ENCODE measurements at regions of chr17 and their contacts with region 1.

Region 1: GRCh38 chr17:55314784-55315491 is 50.2 kb downstream of the HLF start:
- DNase-seq: no peak
- H3K4me3 ChIP-seq: no peak overlapping the region
- H3K27ac ChIP-seq: no peak overlapping the region
- H3K4me1 ChIP-seq: no peaks in the 10 kb centered on the region
- H3K27me3 ChIP-seq: no peaks in the 10 kb centered on the region
- CTCF ChIP-seq: no peak
- POLR2A ChIP-seq: no peak

Region 2: DNA sequence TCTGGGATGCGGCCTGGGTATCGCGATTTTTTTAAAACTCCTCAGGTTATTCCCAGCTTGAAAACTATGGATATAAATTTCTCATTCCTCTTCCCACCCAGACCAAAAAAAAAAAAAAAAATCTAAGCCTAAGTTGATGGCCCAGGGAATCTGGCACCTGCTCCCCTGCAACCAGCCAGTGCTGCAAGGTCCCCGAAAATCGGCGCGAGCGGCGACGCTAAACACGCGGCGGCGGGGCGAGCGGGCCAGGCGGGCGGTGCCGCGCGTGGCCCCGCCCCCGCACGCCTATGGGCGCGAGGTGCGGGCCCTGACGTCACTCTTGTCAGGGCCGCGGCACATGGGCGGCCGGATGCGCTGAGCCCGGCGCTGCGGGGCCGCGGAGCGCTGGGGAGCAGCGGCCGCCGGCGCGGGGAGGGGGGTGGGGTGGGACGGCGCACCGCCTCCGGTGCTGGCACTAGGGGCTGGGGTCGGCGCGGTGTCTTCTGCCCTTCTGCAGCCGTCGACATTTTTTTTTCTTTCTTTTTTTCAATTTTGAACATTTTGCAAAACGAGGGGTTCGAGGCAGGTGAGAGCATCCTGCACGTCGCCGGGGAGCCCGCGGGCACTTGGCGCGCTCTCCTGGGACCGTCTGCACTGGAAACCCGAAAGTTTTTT is 50.2 kb before region 1 on chr17 and contains the start of gene HLF:
- intact Hi-C with region 1: loop called in 1 of 2 experiments (anchors 10 kb)
- DNase-seq: peak; percentile 79 to 88 (median 83)
- H3K4me3 ChIP-seq: peak within 1 kb of the TSS in 2 of 4 donors; percentile 55 to 78
- H3K27ac ChIP-seq: peak within 1 kb of the TSS in 4 of 5 donors; percentile 62 to 90 (median 82)
- H3K4me1 ChIP-seq: peaks cover 3 to 31% of the 10 kb centered on the region in 2 donors
- H3K27me3 ChIP-seq: no peaks in the 10 kb centered on the region
- CTCF ChIP-seq: no peak
- POLR2A ChIP-seq: peak; percentile 64 to 87
- total RNA-seq, gene HLF: 1.3 to 74.3 (median 32.9) TPM

Measured in adrenal gland (tissue), 19 donors.